Breast epithelium (tissue), 4 donors: ENCODE measurements at regions of chr7 and their contacts with region 1.

Region 1: GRCh38 chr7:71843676-71844075 is 568.5 kb downstream of the CALN1 start:
- DNase-seq: no peak
- H3K4me3 ChIP-seq: no peak overlapping the region
- H3K27ac ChIP-seq: no peak overlapping the region
- H3K4me1 ChIP-seq: no peaks in the 10 kb centered on the region
- H3K27me3 ChIP-seq: no peaks in the 10 kb centered on the region
- CTCF ChIP-seq: no peak
- POLR2A ChIP-seq: no peak

Region 2: DNA sequence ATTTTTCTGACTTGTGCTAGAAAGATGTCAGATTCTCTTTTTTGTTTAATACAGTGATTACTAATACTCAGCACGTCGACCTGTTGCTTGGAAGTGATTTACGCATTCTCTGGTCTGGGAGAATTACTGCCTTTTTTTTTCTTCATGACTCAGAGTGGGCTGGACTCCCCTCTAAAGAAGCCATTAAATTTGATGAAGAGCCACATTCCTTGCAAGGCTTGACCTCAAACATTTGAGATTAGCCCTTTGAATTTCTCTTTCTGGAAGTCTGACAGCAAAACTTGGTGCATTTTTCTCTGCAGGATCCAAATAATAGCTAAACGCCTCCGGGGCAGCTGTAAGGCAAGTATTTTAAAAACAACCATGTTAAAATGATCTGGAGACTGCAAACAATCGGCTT is 540.1 kb before region 1 on chr7:
- intact Hi-C with region 1: no loop called
- DNase-seq: no peak
- H3K4me3 ChIP-seq: no peak overlapping the region
- H3K27ac ChIP-seq: no peak overlapping the region
- H3K4me1 ChIP-seq: no peaks in the 10 kb centered on the region
- H3K27me3 ChIP-seq: no peaks in the 10 kb centered on the region
- CTCF ChIP-seq: no peak
- POLR2A ChIP-seq: no peak

Region 3: GRCh38 chr7:71787513-71787912 is 56.2 kb before region 1 on chr7:
- intact Hi-C with region 1: no loop called
- DNase-seq: no peak
- H3K4me3 ChIP-seq: no peak overlapping the region
- H3K27ac ChIP-seq: no peak overlapping the region
- H3K4me1 ChIP-seq: no peaks in the 10 kb centered on the region
- H3K27me3 ChIP-seq: no peaks in the 10 kb centered on the region
- CTCF ChIP-seq: no peak
- POLR2A ChIP-seq: no peak

Region 4: GRCh38 chr7:71824006-71824760 is 19.5 kb before region 1 on chr7:
- intact Hi-C with region 1: loop called (anchors 1 kb)
- DNase-seq: no peak
- H3K4me3 ChIP-seq: no peak overlapping the region
- H3K27ac ChIP-seq: no peak overlapping the region
- H3K4me1 ChIP-seq: no peaks in the 10 kb centered on the region
- H3K27me3 ChIP-seq: no peaks in the 10 kb centered on the region
- CTCF ChIP-seq: no peak
- POLR2A ChIP-seq: no peak

Region 5: DNA sequence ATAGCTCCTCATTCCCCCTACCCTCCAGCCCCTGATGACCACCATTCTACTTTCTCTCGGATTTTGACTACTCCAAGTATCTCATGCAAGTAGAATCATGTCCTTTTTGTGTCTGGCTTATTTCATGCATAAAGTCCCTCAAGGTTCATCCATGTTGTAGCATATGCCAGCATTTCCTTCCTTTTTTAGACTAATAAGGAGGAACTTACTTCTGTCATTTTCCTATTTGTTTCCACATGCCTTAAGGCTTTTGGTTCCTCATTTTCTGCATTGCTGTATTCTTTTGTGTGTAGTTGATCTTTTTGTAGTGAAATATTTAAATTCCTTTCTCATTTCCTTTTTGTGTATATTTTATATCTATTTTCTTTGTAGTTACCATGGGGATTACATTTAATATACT is 191.6 kb after region 1 on chr7:
- intact Hi-C with region 1: no loop called
- DNase-seq: no peak
- H3K4me3 ChIP-seq: no peak overlapping the region
- H3K27ac ChIP-seq: no peak overlapping the region
- H3K4me1 ChIP-seq: no peaks in the 10 kb centered on the region
- H3K27me3 ChIP-seq: no peaks in the 10 kb centered on the region
- CTCF ChIP-seq: no peak
- POLR2A ChIP-seq: no peak

Region 6: GRCh38 chr7:73667344-73668102 is 1823.8 kb after region 1 on chr7 and contains the start of gene VPS37D:
- intact Hi-C with region 1: no loop called
- DNase-seq: peak; percentile 76 to 93
- H3K4me3 ChIP-seq: peak within 1 kb of the TSS; percentile 44 to 97 (median 72)
- H3K27ac ChIP-seq: peak within 1 kb of the TSS; percentile 35 to 40
- H3K4me1 ChIP-seq: no peaks in the 10 kb centered on the region
- H3K27me3 ChIP-seq: no peaks in the 10 kb centered on the region
- CTCF ChIP-seq: peak in 2 of 3 donors; percentile 10 to 99
- POLR2A ChIP-seq: no peak
- total RNA-seq, gene VPS37D: 3.5 to 5.9 (median 3.8) TPM